Activated CD4-positive, alpha-beta memory T cell treated with anti-CD3 and anti-CD28 coated beads for 36 hours (primary cell): ENCODE measurements at regions of chr10 and their contacts with region 1.

Region 1: GRCh38 chr10:61943674-61944410 is 42.3 kb downstream of the ARID5B start:
- DNase-seq: peak; percentile 34
- H3K4me3 Mint-ChIP-seq: peak overlapping the region; percentile 70
- H3K27ac Mint-ChIP-seq: peak overlapping the region; percentile 92
- H3K4me1 Mint-ChIP-seq: peaks cover 57% of the 10 kb centered on the region
- H3K27me3 Mint-ChIP-seq: no peaks in the 10 kb centered on the region

Region 2: DNA sequence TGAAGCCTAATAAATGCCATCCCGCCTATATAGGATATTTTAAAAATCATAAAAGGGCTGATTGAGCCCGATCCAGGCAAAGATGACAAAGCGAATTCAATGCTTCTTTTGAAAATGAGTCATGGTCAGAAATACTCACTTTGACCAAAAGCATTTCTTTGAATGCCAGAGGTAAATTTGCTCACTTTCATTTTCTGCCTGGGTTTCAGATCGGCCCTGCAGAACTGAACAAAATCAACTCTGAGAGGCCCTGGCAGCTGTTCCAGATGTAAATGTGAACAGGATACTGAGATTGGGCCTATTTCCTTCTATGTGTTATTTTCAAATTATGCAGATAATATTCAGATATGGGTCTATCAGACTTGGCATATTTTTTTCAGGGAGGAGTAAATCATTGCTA is 157.1 kb before region 1 on chr10:
- CTCF ChIA-PET with region 1: no interaction called
- POLR2A ChIA-PET with region 1: no interaction called
- intact Hi-C with region 1: loop called (anchors 2 kb)
- DNase-seq: peak; percentile 49
- H3K4me3 Mint-ChIP-seq: no peak overlapping the region
- H3K27ac Mint-ChIP-seq: peak overlapping the region; percentile 19
- H3K4me1 Mint-ChIP-seq: peaks cover 49% of the 10 kb centered on the region
- H3K27me3 Mint-ChIP-seq: no peaks in the 10 kb centered on the region

Region 3: DNA sequence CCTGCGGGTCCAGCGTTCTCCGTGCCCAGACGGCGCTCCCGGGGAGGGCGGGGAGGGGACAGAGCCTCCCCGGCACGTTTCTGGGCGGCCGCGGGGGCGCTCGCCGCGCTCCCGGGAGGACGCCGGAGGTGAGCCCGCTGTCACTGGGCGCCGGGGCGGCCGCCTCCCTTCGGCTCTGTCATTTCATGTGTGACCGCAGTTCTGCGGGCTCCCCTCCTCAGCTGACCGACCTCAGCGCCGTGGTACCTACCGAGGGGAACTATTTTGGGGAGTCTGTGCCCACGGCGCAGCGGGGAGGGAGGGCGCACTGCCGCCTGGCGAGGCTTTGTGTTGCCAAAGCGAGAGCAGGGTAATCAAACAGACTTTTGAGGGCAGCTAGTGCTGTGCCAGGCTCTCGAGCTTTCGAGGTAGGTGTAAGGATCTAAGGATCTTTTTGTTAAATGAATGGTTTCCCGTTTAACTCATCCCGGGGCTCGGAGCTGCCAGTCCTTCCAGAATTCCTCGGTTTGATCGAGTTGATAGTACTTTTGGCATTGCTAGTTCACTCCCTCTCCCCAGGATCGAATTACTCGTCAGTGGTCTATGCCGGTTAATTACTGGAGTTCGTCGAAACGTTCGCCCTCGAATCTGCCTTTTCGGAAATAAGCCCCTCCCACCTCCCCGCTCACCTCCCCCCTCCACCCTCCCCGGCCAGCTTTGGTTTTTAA is 40.5 kb before region 1 on chr10:
- CTCF ChIA-PET with region 1: interaction called, 25 read pairs
- POLR2A ChIA-PET with region 1: interaction called, 67 read pairs
- intact Hi-C with region 1: loop called (anchors 1 kb)
- DNase-seq: peak; percentile 84
- H3K4me3 Mint-ChIP-seq: peak overlapping the region; percentile 90
- H3K27ac Mint-ChIP-seq: peak overlapping the region; percentile 95
- H3K4me1 Mint-ChIP-seq: peaks cover 45% of the 10 kb centered on the region
- H3K27me3 Mint-ChIP-seq: no peaks in the 10 kb centered on the region

Region 4: DNA sequence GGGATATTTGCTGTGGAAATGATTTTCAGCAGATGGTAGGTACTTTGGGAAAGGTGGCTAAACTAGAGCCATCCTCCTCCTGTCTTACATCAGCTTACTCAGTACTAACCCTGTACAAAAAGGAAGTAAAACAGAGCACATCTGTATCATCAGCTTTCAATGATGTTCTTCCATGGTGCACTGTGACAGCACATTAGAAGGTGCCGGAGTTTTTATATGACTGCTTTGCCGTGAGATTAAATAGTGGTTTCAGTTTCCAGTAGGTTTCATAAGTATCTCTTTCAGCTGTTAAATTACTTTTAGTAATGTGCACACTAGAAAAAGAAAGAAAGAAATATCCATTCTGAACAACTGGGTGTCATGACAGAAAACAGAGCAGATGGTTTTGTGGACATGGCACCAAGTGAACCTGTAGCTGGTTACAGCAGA is 44.1 kb after region 1 on chr10:
- CTCF ChIA-PET with region 1: interaction called, 9 read pairs
- POLR2A ChIA-PET with region 1: interaction called, 33 read pairs
- intact Hi-C with region 1: loop called (anchors 1 kb)
- DNase-seq: peak; percentile 50
- H3K4me3 Mint-ChIP-seq: peak overlapping the region; percentile 59
- H3K27ac Mint-ChIP-seq: peak overlapping the region; percentile 95
- H3K4me1 Mint-ChIP-seq: peaks cover 91% of the 10 kb centered on the region
- H3K27me3 Mint-ChIP-seq: no peaks in the 10 kb centered on the region

Region 5: GRCh38 chr10:62224606-62225005 is 280.8 kb after region 1 on chr10:
- CTCF ChIA-PET with region 1: no interaction called
- POLR2A ChIA-PET with region 1: no interaction called
- intact Hi-C with region 1: loop called (anchors 1 kb)
- DNase-seq: no peak
- H3K4me3 Mint-ChIP-seq: no peak overlapping the region
- H3K27ac Mint-ChIP-seq: peak overlapping the region; percentile 50
- H3K4me1 Mint-ChIP-seq: peaks cover 12% of the 10 kb centered on the region
- H3K27me3 Mint-ChIP-seq: no peaks in the 10 kb centered on the region